Heart right ventricle (tissue), 16 donors: ENCODE measurements at regions of chr18 and their contacts with region 1.

Region 1: GRCh38 chr18:29531746-29532145 is 1354.8 kb upstream of the CDH2 start:
- DNase-seq: no peak
- ATAC-seq: no peak
- H3K4me3 ChIP-seq: no peak overlapping the region
- H3K27ac ChIP-seq: no peak overlapping the region
- H3K4me1 ChIP-seq: no peaks in the 10 kb centered on the region
- H3K27me3 ChIP-seq: no peaks in the 10 kb centered on the region
- CTCF ChIP-seq: no peak

Region 2: DNA sequence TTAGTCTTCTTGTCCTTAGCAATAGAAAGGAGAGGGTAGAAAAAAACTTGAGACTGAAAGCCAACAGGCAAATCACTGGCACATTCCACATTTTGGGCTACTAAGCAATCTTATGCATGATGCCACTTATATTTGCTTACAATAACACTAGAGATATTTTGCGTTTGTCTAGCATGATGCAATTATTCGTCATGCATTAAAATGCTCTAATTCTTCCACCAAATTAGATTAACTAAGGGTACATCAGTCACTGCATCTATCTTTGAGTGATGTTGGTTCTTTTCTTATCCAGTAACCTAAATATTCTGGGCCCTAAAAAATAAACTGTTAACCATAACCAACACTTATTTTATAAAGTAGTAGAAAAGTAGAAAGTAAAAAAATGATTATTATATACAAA is 43.1 kb before region 1 on chr18:
- intact Hi-C with region 1: loop called in 1 of 10 experiments (anchors 10 kb)
- DNase-seq: no peak
- ATAC-seq: no peak
- H3K4me3 ChIP-seq: no peak overlapping the region
- H3K27ac ChIP-seq: no peak overlapping the region
- H3K4me1 ChIP-seq: no peaks in the 10 kb centered on the region
- H3K27me3 ChIP-seq: no peaks in the 10 kb centered on the region
- CTCF ChIP-seq: no peak

Region 3: GRCh38 chr18:29588440-29589100 is 56.8 kb after region 1 on chr18:
- intact Hi-C with region 1: loop called in 1 of 10 experiments (anchors 5 kb)
- DNase-seq: no peak
- ATAC-seq: no peak
- H3K4me3 ChIP-seq: no peak overlapping the region
- H3K27ac ChIP-seq: no peak overlapping the region
- H3K4me1 ChIP-seq: no peaks in the 10 kb centered on the region
- H3K27me3 ChIP-seq: no peaks in the 10 kb centered on the region
- CTCF ChIP-seq: no peak

Region 4: GRCh38 chr18:29928081-29928480 is 396.3 kb after region 1 on chr18:
- intact Hi-C with region 1: no loop called
- DNase-seq: no peak
- ATAC-seq: no peak
- H3K4me3 ChIP-seq: no peak overlapping the region
- H3K27ac ChIP-seq: no peak overlapping the region
- H3K4me1 ChIP-seq: no peaks in the 10 kb centered on the region
- H3K27me3 ChIP-seq: no peaks in the 10 kb centered on the region
- CTCF ChIP-seq: no peak